OCI-LY7 (cell line): ENCODE measurements at regions of chr2 and their contacts with region 1.

Region 1: DNA sequence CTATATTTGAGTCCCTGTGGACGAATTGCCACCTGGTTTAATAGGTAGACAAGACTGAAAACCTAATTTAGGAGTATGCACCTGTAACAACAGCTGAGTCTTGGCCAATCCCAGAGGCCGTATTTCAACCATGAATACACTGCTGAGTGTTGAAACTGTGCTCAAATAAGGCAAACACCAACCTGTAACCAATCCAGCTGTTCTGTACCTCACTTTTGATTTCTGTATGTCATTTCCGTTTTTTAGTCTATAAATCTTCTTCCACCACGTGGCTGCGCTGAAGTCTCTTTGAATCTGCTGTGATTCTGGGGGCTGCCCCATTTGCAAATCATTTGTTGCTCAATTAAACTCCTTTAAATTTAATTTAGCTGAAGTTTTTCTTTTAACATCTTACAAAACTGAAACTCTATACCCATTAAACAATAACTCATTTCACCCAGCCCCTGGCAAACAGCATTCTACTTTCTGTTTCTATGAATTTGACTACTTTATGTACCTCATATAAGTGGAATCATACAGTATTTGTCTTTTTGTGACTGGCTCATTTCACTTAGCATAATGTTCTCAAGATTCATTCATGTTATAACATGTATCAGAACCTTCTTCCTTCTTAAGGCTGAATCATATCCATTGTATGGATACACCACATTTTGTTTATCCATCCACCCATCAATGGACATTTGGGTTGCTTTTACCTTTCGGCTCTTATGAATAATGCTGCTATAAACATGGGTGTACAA is 7.5 kb upstream of the YPEL5 start:
- DNase-seq: peak; percentile 87
- H3K4me3 ChIP-seq: peak overlapping the region; percentile 45
- H3K27ac ChIP-seq: peak overlapping the region; percentile 87
- H3K4me1 ChIP-seq: peaks cover 31% of the 10 kb centered on the region
- CTCF ChIP-seq: no peak; the same call in 1 of the 2 replicates

Region 2: DNA sequence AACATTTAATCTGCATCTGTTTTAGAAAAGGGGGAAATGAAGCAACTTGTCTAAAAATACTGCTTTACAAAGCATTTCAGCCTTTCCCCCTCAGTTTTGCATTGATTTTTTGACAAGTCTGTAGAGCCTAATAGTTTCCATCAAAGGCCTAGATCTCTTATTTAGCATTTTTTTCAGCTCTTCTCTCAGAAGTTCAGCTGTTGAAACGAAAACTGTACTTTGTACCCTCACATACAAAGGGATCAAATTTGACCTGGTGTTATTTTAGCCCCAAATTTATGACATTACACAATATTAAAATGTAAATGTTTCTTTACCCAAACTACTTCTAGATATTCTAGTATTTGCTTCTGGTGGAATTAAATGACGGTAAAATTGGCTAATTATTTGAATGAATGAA is 20.5 kb after region 1 on chr2:
- CTCF ChIA-PET with region 1: no interaction called
- POLR2A ChIA-PET with region 1: interaction called, 3 read pairs
- intact Hi-C with region 1: loop called (anchors 1 kb)
- DNase-seq: peak; percentile 45
- H3K4me3 ChIP-seq: peak overlapping the region; percentile 22
- H3K27ac ChIP-seq: peak overlapping the region; percentile 75
- H3K4me1 ChIP-seq: peaks cover 34% of the 10 kb centered on the region
- CTCF ChIP-seq: no peak